BJ (cell line): ENCODE measurements at regions of chr20 and their contacts with region 1.

Region 1: DNA sequence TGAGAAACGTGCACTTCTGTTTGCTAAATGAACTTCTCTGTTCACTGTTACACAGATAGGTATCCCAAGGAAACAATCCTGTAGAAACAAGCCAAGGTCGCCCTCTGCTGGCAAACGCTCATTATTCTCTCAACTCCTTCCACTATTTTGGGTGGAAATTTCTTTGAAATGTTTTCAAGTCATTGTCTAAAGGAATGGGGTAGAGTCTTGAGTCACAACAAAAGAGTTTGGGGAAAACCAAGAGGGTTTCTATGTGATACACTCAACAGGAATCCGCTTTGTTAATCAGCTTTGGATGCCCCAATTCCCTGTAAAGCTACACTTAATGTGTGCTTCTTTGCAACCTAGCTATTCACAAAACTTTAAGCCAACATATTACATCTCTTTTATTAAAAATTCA is 4.6 kb upstream of the RAE1 start:
- DNase-seq: peak; percentile 52
- H3K4me3 ChIP-seq: no peak overlapping the region
- H3K27me3 ChIP-seq: no peaks in the 10 kb centered on the region; the same call in 1 of the 2 replicates
- CTCF ChIP-seq: peak; percentile 74

Region 2: GRCh38 chr20:57089691-57090150 is 256.8 kb before region 1 on chr20:
- CTCF ChIA-PET with region 1: interaction called, 127 read pairs
- POLR2A ChIA-PET with region 1: no interaction called
- DNase-seq: no peak
- H3K4me3 ChIP-seq: no peak overlapping the region
- H3K27me3 ChIP-seq: peaks cover 2% of the 10 kb centered on the region
- CTCF ChIP-seq: peak; percentile 97

Region 3: GRCh38 chr20:57323034-57323433 is 23.4 kb before region 1 on chr20:
- CTCF ChIA-PET with region 1: interaction called, 16 read pairs
- POLR2A ChIA-PET with region 1: no interaction called
- DNase-seq: no peak
- H3K4me3 ChIP-seq: no peak overlapping the region
- H3K27me3 ChIP-seq: peaks cover 8% of the 10 kb centered on the region
- CTCF ChIP-seq: no peak

Region 4: DNA sequence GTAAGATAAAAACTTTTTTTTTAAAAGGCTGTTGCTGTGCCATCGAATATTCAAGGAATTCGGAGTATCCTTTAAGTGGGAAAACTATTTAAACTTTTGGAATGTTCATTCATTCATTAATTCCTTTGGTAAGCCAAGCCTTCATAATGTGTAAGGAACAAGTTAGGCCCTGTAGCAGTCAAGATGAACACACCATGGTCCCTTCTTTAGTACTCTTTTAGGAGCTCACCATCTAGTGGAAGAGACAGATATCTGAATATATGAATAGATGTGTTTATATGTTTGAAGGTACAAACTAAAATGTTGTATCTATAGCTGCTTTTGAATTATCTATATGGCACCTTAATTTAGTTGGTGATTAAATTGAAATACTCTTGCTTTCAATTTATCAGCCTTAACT is 11.1 kb before region 1 on chr20:
- CTCF ChIA-PET with region 1: interaction called, 22 read pairs
- POLR2A ChIA-PET with region 1: no interaction called
- DNase-seq: no peak
- H3K4me3 ChIP-seq: no peak overlapping the region
- H3K27me3 ChIP-seq: no peaks in the 10 kb centered on the region
- CTCF ChIP-seq: no peak